ENCODE measurements at regions of chr2 and their contacts with region 1.

Region 1: GRCh38 chr2:109624339-109624738 is 10.2 kb downstream of the SOWAHC start:
- DNase-seq: no peak
- H3K4me3 ChIP-seq: no peak overlapping the region
- H3K27ac ChIP-seq: no peak overlapping the region
- H3K4me1 ChIP-seq: no peaks in the 10 kb centered on the region
- H3K27me3 ChIP-seq: no peaks in the 10 kb centered on the region
- CTCF ChIP-seq: no peak
- EP300 ChIP-seq: no peak
- POLR2A ChIP-seq: no peak
- RAD21 ChIP-seq: no peak

Region 2: DNA sequence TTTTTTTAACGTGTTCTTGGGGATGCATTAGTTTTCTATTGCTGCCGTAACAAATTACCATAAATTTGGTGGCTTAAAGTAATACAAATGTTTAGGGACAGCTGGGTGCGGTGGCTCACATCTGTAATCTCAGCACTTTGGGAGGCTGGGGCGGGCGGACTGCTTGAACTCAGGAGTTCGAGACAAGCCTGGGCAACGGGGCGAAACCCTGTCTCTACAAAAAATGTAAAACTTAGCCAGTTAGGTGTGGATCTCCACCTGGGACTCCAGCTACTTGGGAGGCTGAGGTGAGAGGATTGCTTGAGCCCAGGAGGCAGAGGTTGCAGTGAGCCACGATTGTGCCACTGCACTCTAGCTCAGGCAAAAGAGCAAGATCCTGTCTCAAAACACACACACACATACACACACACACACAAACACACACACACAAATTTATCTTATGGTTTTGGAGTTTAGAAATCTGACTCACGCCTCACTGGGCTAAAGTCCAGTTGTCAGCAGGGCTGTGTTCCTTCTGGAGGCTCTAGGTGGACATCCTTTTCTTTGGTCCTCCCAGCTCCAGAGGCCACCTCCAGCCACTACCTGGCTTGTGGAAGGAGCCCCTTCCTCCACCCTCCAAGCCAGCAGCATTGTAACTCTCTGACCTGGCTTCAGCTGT is 86.6 kb before region 1 on chr2:
- CTCF ChIA-PET with region 1: no interaction called
- POLR2A ChIA-PET with region 1: no interaction called
- DNase-seq: no peak
- H3K4me3 ChIP-seq: no peak overlapping the region
- H3K27ac ChIP-seq: no peak overlapping the region
- H3K4me1 ChIP-seq: no peaks in the 10 kb centered on the region; a peak in 1 of 7 replicates
- H3K27me3 ChIP-seq: no peaks in the 10 kb centered on the region
- CTCF ChIP-seq: no peak
- EP300 ChIP-seq: no peak
- POLR2A ChIP-seq: no peak
- RAD21 ChIP-seq: no peak

Region 3: DNA sequence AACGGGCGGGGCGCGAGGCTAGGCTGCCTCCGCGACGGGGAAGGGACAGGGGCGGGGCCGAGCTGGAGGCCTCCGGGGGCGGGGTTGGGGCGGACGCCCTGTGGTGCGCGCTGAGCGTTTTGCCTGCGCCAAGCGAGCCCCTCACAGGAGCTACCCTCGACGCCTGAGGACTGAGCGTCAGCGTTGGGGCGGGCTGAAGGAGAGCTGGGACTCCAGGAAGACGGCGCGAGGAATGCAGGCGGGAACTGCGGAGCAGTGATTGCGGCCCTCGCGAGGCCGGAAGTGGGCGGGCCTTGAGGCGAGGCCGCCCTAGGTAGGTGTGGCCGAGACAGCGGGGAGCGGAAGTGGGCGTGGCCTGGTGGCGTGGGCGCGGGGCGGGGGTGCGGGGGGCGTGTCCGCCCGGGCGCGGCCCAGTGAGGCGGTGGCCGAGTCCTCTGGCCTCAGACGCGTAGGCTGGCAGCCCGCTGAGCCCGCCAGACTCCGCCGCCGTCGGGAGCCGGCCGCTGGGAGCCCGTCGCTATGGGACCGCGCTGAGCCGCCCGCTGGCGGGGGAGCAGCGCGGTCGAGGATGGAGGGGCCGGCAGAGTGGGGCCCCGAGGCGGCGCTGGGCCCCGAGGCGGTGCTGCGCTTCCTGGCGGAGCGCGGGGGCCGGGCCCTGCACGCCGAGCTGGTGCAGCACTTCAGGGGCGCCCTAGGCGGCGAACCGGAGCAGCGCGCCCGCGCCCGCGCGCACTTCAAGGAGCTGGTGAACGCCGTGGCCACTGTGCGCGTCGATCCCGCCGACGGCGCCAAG is 10.2 kb before region 1 on chr2 and contains the starts of genes SEPTIN10 and SOWAHC:
- CTCF ChIA-PET with region 1: no interaction called
- POLR2A ChIA-PET with region 1: interaction called, 19 read pairs
- DNase-seq: peak; percentile 96
- H3K4me3 ChIP-seq: peak within 1 kb of the TSS; percentile 82 to 97 (median 88)
- H3K27ac ChIP-seq: peak within 1 kb of the TSS; percentile 72
- H3K4me1 ChIP-seq: peaks cover 0 to 17% (median 9%) of the 10 kb centered on the region in 4 experiments; a peak in 5 of 7 replicates
- H3K27me3 ChIP-seq: peaks cover 0 to 17% (median 11%) of the 10 kb centered on the region in 4 experiments; a peak in 5 of 7 replicates
- CTCF ChIP-seq: no peak
- EP300 ChIP-seq: 0 out of 3 replicates have a peak, but pooled peaks of 1 of the 2 experiments have one; percentile 18
- POLR2A ChIP-seq: peak; percentile 78 to 89
- RAD21 ChIP-seq: no peak
- total RNA-seq, gene SEPTIN10: 93.6 and 101 TPM in 2 replicates
- total RNA-seq, gene SOWAHC: 16.8 and 17.8 TPM in 2 replicates

Region 4: GRCh38 chr2:109644576-109645275 is 20.4 kb after region 1 on chr2:
- CTCF ChIA-PET with region 1: no interaction called
- POLR2A ChIA-PET with region 1: no interaction called
- DNase-seq: peak in 1 of 2 experiments; percentile 49
- H3K4me3 ChIP-seq: no peak overlapping the region
- H3K27ac ChIP-seq: no peak overlapping the region
- H3K4me1 ChIP-seq: peaks cover 8 to 15% (median 13%) of the 10 kb centered on the region in 4 experiments; a peak in 6 of 7 replicates
- H3K27me3 ChIP-seq: no peaks in the 10 kb centered on the region
- CTCF ChIP-seq: no peak
- EP300 ChIP-seq: no peak
- POLR2A ChIP-seq: no peak
- RAD21 ChIP-seq: no peak

Region 5: GRCh38 chr2:109670556-109671411 is 46.4 kb after region 1 on chr2:
- CTCF ChIA-PET with region 1: no interaction called
- POLR2A ChIA-PET with region 1: no interaction called
- DNase-seq: no peak
- H3K4me3 ChIP-seq: no peak overlapping the region
- H3K27ac ChIP-seq: no peak overlapping the region
- H3K4me1 ChIP-seq: no peaks in the 10 kb centered on the region; a peak in 1 of 7 replicates
- H3K27me3 ChIP-seq: no peaks in the 10 kb centered on the region
- CTCF ChIP-seq: peak in 1 of 3 experiments; percentile 3; a peak in 1 of 4 replicates
- EP300 ChIP-seq: no peak
- POLR2A ChIP-seq: no peak
- RAD21 ChIP-seq: 0 out of 4 replicates have a peak, but pooled peaks of 1 of the 2 experiments have one; percentile 12

Measured in H1 (cell line).